PC-3 (cell line): ENCODE measurements at regions of chr7 and their contacts with region 1.

Region 1: GRCh38 chr7:111438369-111439289 is 123.7 kb downstream of the IMMP2L start:
- DNase-seq: peak; percentile 52
- ATAC-seq: peak; percentile 85
- H3K4me3 ChIP-seq: no peak overlapping the region
- H3K27ac ChIP-seq: no peak overlapping the region
- H3K4me1 ChIP-seq: peaks cover 6% of the 10 kb centered on the region; the same call in 1 of the 2 replicates
- H3K27me3 ChIP-seq: no peaks in the 10 kb centered on the region
- CTCF ChIP-seq: no peak

Region 2: GRCh38 chr7:111362506-111363054 is 76.0 kb before region 1 on chr7:
- CTCF ChIA-PET with region 1: no interaction called
- POLR2A ChIA-PET with region 1: no interaction called
- intact Hi-C with region 1: loop called (anchors 5 kb)
- DNase-seq: peak; percentile 8
- ATAC-seq: no peak
- H3K4me3 ChIP-seq: no peak overlapping the region
- H3K27ac ChIP-seq: no peak overlapping the region
- H3K4me1 ChIP-seq: peaks cover 25% of the 10 kb centered on the region
- H3K27me3 ChIP-seq: no peaks in the 10 kb centered on the region
- CTCF ChIP-seq: no peak